Posterior vena cava (tissue), 2 donors: ENCODE measurements at regions of chr11 and their contacts with region 1.

Region 1: GRCh38 chr11:78228467-78228866 is 39.7 kb downstream of the USP35 start:
- DNase-seq: no peak

Region 2: GRCh38 chr11:78212586-78213371 is 15.7 kb before region 1 on chr11:
- intact Hi-C with region 1: no loop called
- DNase-seq: no peak

Region 3: DNA sequence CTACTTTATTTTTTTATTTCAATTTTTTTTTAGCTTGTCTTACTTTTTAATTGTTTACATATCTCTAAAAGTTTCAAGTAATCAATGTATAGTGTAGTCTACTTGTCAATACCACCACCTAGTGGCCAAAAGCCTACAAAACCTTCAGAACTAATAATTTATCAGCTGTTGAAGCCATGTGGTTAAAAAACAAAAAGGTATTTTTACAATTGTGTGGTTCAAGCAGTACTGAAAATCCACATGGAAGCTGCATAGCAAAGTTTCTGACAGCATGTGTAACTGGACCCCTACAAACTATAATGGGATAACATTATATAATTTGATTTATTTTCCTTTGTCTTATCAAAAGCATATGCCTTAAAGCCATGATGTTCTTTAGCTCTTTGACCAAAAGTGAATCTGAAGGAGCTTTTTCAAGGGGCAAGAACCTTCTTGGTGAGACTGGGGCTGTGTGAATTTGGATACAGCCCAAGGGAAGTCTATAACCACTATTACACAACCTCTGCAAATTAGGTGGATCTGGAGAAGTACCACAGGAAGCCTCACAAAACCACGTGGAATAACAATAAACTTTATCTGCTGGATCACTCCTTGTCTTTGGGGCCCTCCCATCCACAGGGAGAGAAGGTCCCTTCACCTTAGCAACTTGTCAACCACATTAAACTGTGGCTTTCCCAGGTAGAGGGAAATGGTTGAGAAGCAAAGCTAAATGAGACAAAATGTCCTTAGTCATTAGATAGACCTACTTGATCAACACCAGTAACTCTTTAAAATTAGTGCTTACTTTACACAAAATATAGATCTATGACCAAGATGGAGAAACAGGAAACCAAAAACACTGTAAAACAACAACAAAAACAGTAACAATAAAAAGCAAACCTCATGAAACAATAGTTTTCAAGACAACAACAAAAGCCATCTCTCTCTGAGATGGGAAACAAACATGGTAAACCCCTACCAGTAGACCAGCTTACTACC is 336.3 kb after region 1 on chr11:
- intact Hi-C with region 1: loop called in 1 of 2 experiments (anchors 10 kb)
- DNase-seq: no peak